ENCODE measurements at regions of chr1 and their contacts with region 1.

Region 1: DNA sequence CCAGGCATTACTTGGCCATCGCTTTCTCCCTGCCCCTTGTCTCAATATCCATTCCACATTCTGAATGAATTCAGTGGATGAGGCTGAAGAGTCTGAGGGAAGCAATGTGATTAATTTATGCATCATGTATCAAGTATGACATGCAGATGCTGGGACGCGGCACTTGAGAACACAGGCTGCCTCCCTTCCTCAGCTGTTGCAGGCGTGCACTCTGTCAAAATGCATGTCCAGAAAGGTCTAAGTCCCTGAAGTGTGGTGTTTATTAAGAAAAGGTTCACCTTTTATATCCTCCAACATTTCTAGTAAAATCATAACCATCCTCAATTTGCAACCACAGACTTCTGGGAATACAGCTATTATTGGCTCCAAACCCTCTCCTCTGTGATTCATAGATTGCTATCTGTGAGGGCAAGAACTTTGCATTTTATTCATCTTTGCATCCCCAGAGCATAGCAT is 22.6 kb upstream of the RAB3GAP2 start:
- DNase-seq: no peak
- ATAC-seq: no peak
- H3K4me3 Mint-ChIP-seq: no peak overlapping the region
- H3K27ac Mint-ChIP-seq: no peak overlapping the region
- H3K4me1 Mint-ChIP-seq: peaks cover 37% of the 10 kb centered on the region
- H3K27me3 Mint-ChIP-seq: no peaks in the 10 kb centered on the region
- CTCF ChIP-seq: no peak

Region 2: DNA sequence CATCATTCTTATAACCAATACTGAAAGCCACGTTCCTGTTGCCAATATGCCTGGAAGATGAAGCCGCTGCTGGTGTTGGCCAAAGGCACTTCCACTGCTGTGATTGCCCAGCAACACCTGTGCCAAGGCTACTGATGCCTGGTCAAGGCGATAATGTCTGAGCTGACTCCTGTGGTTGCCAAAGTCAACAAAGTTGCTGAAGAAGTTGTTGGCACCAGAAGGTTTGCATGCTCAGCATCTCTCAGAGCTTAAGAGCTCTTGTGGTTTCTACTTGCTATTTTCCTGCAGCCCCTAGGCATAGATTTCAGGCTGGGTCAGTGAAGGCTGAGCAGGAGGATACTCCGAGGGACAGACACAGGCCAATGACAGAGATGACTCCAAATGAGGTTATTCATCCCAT is 40.8 kb after region 1 on chr1:
- CTCF ChIA-PET with region 1: interaction called, 13 read pairs
- POLR2A ChIA-PET with region 1: no interaction called
- DNase-seq: no peak
- ATAC-seq: no peak
- H3K4me3 Mint-ChIP-seq: no peak overlapping the region
- H3K27ac Mint-ChIP-seq: peak overlapping the region; percentile 67
- H3K4me1 Mint-ChIP-seq: peaks cover 52% of the 10 kb centered on the region
- H3K27me3 Mint-ChIP-seq: no peaks in the 10 kb centered on the region; the same call in 1 of the 2 replicates
- CTCF ChIP-seq: no peak